Activated CD8-positive, alpha-beta T cell treated with anti-CD3 and anti-CD28 coated beads, Interleukin-2, amount 10 ng/mL, durations not matched to agents 7 days and 5 days (primary cell): ENCODE measurements at regions of chr1 and their contacts with region 1.

Region 1: DNA sequence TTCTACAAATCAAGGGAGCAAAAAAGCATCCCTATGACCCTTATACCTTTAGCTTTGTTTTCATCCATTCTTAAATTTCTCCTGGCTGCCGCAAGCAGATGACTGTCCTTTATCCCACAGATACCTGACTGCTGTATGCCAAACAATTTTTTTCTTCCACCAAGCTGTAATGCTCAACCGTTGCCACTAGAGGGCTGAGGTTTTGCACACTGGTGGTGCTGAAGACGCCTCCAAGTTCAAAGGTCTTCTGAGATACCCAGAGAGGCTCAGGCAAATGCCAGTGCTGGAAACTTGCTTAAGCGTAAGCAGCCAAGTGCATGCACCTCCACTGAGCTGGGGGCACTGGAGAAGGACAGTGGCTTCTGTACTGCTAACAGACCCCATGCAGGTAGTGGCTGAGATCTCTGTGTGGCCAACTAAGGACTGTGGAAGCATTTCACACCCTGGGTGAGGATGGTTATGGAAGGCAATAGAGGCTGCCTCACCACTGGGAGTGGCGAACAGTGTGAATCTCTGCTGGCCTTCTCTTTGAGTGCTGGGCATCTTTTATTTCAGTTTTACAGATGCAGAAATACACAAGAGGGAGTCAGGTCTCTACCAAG is 28.5 kb downstream of the CNIH3 start:
- DNase-seq: peak; percentile 72
- ATAC-seq: peak; percentile 79
- H3K4me3 Mint-ChIP-seq: no peak overlapping the region
- H3K27ac Mint-ChIP-seq: no peak overlapping the region
- H3K4me1 Mint-ChIP-seq: peaks cover 3% of the 10 kb centered on the region
- H3K27me3 Mint-ChIP-seq: peaks cover 11% of the 10 kb centered on the region

Region 2: GRCh38 chr1:224632381-224632871 is 12.2 kb before region 1 on chr1:
- CTCF ChIA-PET with region 1: interaction called, 20 read pairs
- POLR2A ChIA-PET with region 1: no interaction called
- DNase-seq: no peak
- ATAC-seq: no peak
- H3K4me3 Mint-ChIP-seq: no peak overlapping the region
- H3K27ac Mint-ChIP-seq: no peak overlapping the region
- H3K4me1 Mint-ChIP-seq: peaks cover 6% of the 10 kb centered on the region
- H3K27me3 Mint-ChIP-seq: peaks cover 13% of the 10 kb centered on the region

Region 3: GRCh38 chr1:224696891-224697765 is 52.5 kb after region 1 on chr1:
- CTCF ChIA-PET with region 1: no interaction called
- POLR2A ChIA-PET with region 1: no interaction called
- DNase-seq: no peak
- ATAC-seq: no peak
- H3K4me3 Mint-ChIP-seq: no peak overlapping the region
- H3K27ac Mint-ChIP-seq: no peak overlapping the region
- H3K4me1 Mint-ChIP-seq: no peaks in the 10 kb centered on the region
- H3K27me3 Mint-ChIP-seq: no peaks in the 10 kb centered on the region